ENCODE measurements at regions of chr17 and their contacts with region 1.

Region 1: GRCh38 chr17:52681480-52681879 is 523.0 kb upstream of the CA10 start:
- DNase-seq: no peak
- H3K4me3 ChIP-seq: no peak overlapping the region
- H3K27ac ChIP-seq: no peak overlapping the region
- H3K4me1 ChIP-seq: no peaks in the 10 kb centered on the region
- H3K27me3 ChIP-seq: no peaks in the 10 kb centered on the region
- CTCF ChIP-seq: no peak

Region 2: DNA sequence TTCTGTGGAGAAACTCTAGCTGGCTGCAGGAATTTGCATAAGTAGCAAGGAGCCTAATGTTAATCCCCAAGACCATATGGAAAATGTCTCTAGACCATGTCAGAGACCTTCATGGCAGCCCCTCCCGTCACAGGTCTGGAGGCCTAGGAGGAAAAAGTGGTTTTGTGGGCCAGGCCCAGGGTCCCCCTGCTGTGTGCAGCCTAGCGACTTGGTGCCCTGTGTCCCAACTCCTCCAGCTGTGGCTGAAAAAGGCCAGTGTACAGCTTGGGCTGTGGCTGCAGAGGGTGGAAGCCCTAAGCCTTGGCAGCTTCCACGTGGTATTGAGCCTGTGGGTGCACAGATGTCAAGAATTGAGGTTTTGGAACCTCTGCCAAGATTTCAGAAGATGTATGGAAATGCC is 216.1 kb before region 1 on chr17:
- CTCF ChIA-PET with region 1: no interaction called
- POLR2A ChIA-PET with region 1: no interaction called
- intact Hi-C with region 1: loop called (anchors 10 kb)
- DNase-seq: no peak
- H3K4me3 ChIP-seq: no peak overlapping the region
- H3K27ac ChIP-seq: no peak overlapping the region
- H3K4me1 ChIP-seq: no peaks in the 10 kb centered on the region
- H3K27me3 ChIP-seq: no peaks in the 10 kb centered on the region
- CTCF ChIP-seq: no peak

Region 3: GRCh38 chr17:52837492-52838272 is 156.2 kb after region 1 on chr17:
- CTCF ChIA-PET with region 1: no interaction called
- POLR2A ChIA-PET with region 1: no interaction called
- intact Hi-C with region 1: no loop called
- DNase-seq: no peak
- H3K4me3 ChIP-seq: no peak overlapping the region
- H3K27ac ChIP-seq: no peak overlapping the region
- H3K4me1 ChIP-seq: no peaks in the 10 kb centered on the region
- H3K27me3 ChIP-seq: no peaks in the 10 kb centered on the region
- CTCF ChIP-seq: no peak

Region 4: GRCh38 chr17:52885882-52886281 is 204.4 kb after region 1 on chr17:
- CTCF ChIA-PET with region 1: no interaction called
- POLR2A ChIA-PET with region 1: no interaction called
- intact Hi-C with region 1: no loop called
- DNase-seq: peak; percentile 1
- H3K4me3 ChIP-seq: no peak overlapping the region
- H3K27ac ChIP-seq: no peak overlapping the region
- H3K4me1 ChIP-seq: no peaks in the 10 kb centered on the region
- H3K27me3 ChIP-seq: no peaks in the 10 kb centered on the region
- CTCF ChIP-seq: no peak

Measured in A673 (cell line).